ENCODE measurements at regions of chr16 and their contacts with region 1.

Region 1: DNA sequence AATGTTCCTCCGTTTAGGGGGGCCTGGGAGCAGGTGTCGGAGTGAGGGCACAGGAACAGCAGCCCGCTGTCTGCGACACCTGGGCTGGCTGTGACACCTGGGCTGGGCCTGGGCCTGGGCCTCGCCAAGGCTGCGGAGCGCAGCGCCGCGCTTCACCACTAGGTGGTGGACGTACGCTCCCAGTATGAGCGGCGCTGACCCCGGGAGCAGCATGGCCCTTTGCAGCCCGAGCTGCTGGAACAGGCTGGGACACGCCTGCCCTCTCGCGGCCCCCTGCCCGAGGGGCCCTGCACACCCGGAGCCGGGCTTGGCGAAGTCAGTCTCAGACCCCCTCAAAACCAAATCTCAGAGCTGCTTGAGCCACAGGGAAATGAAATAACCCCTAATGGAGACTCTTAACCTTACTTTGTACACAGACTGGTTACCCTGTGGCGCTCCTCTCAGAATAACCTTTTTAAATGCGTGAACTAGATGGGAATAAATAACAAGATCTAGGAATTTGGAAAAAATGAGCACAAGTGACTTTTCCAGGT is 38.6 kb upstream of the FA2H start:
- DNase-seq: peak; percentile 73
- H3K4me3 Mint-ChIP-seq: no peak overlapping the region
- H3K27ac Mint-ChIP-seq: no peak overlapping the region
- H3K4me1 Mint-ChIP-seq: peaks cover 15% of the 10 kb centered on the region
- H3K27me3 Mint-ChIP-seq: no peaks in the 10 kb centered on the region
- CTCF ChIP-seq: peak; percentile 90

Region 2: GRCh38 chr16:74477226-74477625 is 335.9 kb before region 1 on chr16:
- CTCF ChIA-PET with region 1: no interaction called
- POLR2A ChIA-PET with region 1: no interaction called
- intact Hi-C with region 1: no loop called
- DNase-seq: no peak
- H3K4me3 Mint-ChIP-seq: no peak overlapping the region
- H3K27ac Mint-ChIP-seq: no peak overlapping the region
- H3K4me1 Mint-ChIP-seq: peaks cover 28% of the 10 kb centered on the region
- H3K27me3 Mint-ChIP-seq: no peaks in the 10 kb centered on the region
- CTCF ChIP-seq: no peak

Region 3: DNA sequence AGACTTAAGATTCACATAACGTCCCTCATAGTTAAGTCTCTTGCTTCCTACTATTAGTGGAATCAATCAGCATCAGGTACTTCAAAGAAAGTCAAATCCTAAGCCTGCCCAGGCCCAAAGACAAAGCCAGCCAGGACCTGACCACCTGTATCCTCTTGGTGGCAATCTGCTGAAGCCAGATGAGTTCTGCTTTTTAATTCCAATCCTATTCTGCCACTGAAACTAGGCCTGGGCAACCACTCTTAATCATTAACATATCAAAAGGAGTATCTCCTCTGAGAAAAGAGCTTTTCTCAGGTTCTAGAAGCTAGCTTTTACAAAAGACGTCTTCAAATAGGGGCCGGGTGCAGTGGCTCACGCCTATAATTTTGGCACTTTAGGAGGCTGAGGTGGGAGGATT is 191.2 kb before region 1 on chr16:
- CTCF ChIA-PET with region 1: no interaction called
- POLR2A ChIA-PET with region 1: no interaction called
- intact Hi-C with region 1: no loop called
- DNase-seq: no peak
- H3K4me3 Mint-ChIP-seq: no peak overlapping the region
- H3K27ac Mint-ChIP-seq: no peak overlapping the region
- H3K4me1 Mint-ChIP-seq: no peaks in the 10 kb centered on the region
- H3K27me3 Mint-ChIP-seq: no peaks in the 10 kb centered on the region
- CTCF ChIP-seq: no peak

Region 4: DNA sequence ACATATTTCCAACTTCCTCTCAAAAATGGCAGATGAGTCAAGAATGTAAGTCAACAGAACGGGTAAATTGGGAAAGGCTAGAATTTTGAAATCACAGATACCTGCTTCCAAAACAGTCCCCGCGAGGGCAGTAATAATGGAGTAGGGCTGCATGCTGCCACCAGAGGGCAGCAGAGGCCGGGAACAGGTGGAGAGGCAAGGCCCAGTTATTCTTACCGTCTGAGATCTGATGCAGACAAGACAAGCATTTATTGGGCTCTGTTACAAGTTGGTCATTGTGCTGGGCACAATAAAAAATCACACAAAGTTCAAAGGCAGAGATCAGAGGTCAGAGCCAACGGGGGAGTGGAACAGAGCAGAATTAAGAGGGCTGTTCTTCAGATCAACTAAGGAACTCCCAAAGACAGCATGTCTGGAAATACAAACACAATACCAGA is 103.7 kb before region 1 on chr16:
- CTCF ChIA-PET with region 1: interaction called, 33 read pairs
- POLR2A ChIA-PET with region 1: no interaction called
- intact Hi-C with region 1: loop called (anchors 1 kb)
- DNase-seq: peak; percentile 91
- H3K4me3 Mint-ChIP-seq: no peak overlapping the region
- H3K27ac Mint-ChIP-seq: no peak overlapping the region
- H3K4me1 Mint-ChIP-seq: no peaks in the 10 kb centered on the region
- H3K27me3 Mint-ChIP-seq: no peaks in the 10 kb centered on the region
- CTCF ChIP-seq: peak; percentile 93

Region 5: GRCh38 chr16:74774203-74775116 is 38.7 kb before region 1 on chr16 and contains the start of gene FA2H:
- CTCF ChIA-PET with region 1: interaction called, 20 read pairs
- POLR2A ChIA-PET with region 1: interaction called, 3 read pairs
- intact Hi-C with region 1: no loop called
- DNase-seq: peak; percentile 88
- H3K4me3 Mint-ChIP-seq: peak within 1 kb of the TSS; percentile 62
- H3K27ac Mint-ChIP-seq: no peak within 1 kb of the TSS
- H3K4me1 Mint-ChIP-seq: peaks cover 13% of the 10 kb centered on the region
- H3K27me3 Mint-ChIP-seq: peaks cover 23% of the 10 kb centered on the region
- CTCF ChIP-seq: peak; percentile 32
- total RNA-seq, gene FA2H: not detected in 2 replicates

Region 6: GRCh38 chr16:74837056-74837455 is 23.9 kb after region 1 on chr16:
- CTCF ChIA-PET with region 1: interaction called, 10 read pairs
- POLR2A ChIA-PET with region 1: interaction called, 4 read pairs
- intact Hi-C with region 1: no loop called
- DNase-seq: no peak
- H3K4me3 Mint-ChIP-seq: no peak overlapping the region
- H3K27ac Mint-ChIP-seq: no peak overlapping the region
- H3K4me1 Mint-ChIP-seq: peaks cover 4% of the 10 kb centered on the region
- H3K27me3 Mint-ChIP-seq: peaks cover 12% of the 10 kb centered on the region
- CTCF ChIP-seq: no peak

Region 7: GRCh38 chr16:74984535-74985296 is 171.5 kb after region 1 on chr16 and contains the start of gene WDR59:
- CTCF ChIA-PET with region 1: no interaction called
- POLR2A ChIA-PET with region 1: no interaction called
- intact Hi-C with region 1: no loop called
- DNase-seq: peak; percentile 100
- H3K4me3 Mint-ChIP-seq: peak within 1 kb of the TSS; percentile 82
- H3K27ac Mint-ChIP-seq: peak within 1 kb of the TSS; percentile 89
- H3K4me1 Mint-ChIP-seq: no peaks in the 10 kb centered on the region
- H3K27me3 Mint-ChIP-seq: no peaks in the 10 kb centered on the region
- CTCF ChIP-seq: no peak
- total RNA-seq, gene WDR59: 53.8 and 56.1 TPM in 2 replicates